Activated T-helper 2 cell treated with anti-CD3 and anti-CD28 coated beads, Interferon-gamma antibody, Interleukin-2, Interleukin-4, amounts not matched to agents 10 μg/mL and 5 μg/mL and 100 μg/mL, durations not matched to agents 14 hours and 24 hours and 36 hours (primary cell): ENCODE measurements at regions of chr7 and their contacts with region 1.

Region 1: GRCh38 chr7:27196287-27196767 is 3.6 kb downstream of the HOXA13 start:
- DNase-seq: peak; percentile 59
- H3K4me3 Mint-ChIP-seq: no peak overlapping the region
- H3K27ac Mint-ChIP-seq: no peak overlapping the region
- H3K4me1 Mint-ChIP-seq: peaks cover 6% of the 10 kb centered on the region
- H3K27me3 Mint-ChIP-seq: peaks cover 82% of the 10 kb centered on the region

Region 2: DNA sequence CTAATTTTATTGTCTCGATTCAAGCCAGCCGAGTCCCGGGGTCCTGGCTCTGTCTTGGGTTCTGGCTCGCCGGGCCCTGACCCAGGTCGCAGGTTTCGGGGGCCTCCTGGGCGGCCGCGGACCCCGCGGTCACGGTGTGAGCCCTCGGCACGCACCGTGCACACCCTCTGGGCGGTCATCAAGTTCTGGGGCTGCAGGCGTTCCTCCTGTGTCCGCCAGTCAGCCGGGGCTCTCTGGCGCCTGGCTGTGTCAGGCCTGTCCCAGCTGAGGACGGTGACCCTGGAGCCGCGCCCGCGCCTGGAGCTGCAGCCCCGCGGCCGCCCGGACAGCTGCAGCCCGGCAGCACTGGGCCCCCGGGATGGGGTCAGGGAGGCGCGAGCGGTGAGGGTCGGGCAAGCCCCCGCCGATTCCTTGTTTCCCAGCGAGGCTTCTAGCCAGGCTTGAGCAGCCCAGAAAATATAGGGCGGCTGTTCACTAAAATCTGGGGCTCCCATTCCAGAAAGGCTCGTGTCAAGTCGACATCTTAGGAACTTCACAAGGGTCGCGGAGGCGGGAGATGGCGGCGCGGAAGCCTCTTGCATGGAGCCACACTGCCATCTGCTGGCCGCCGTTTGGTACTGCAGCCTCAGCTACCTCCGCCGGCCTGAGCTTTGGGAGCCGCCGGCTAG is 35.6 kb before region 1 on chr7:
- intact Hi-C with region 1: loop called (anchors 5 kb)
- DNase-seq: peak; percentile 65
- H3K4me3 Mint-ChIP-seq: peak overlapping the region; percentile 47
- H3K27ac Mint-ChIP-seq: no peak overlapping the region
- H3K4me1 Mint-ChIP-seq: peaks cover 5% of the 10 kb centered on the region
- H3K27me3 Mint-ChIP-seq: peaks cover 81% of the 10 kb centered on the region

Region 3: GRCh38 chr7:27184337-27185012 is 11.9 kb before region 1 on chr7:
- intact Hi-C with region 1: loop called (anchors 2 kb)
- DNase-seq: no peak
- H3K4me3 Mint-ChIP-seq: no peak overlapping the region
- H3K27ac Mint-ChIP-seq: peak overlapping the region; percentile 55
- H3K4me1 Mint-ChIP-seq: peaks cover 14% of the 10 kb centered on the region
- H3K27me3 Mint-ChIP-seq: peaks cover 73% of the 10 kb centered on the region

Region 4: GRCh38 chr7:27224983-27225934 is 28.9 kb after region 1 on chr7:
- intact Hi-C with region 1: no loop called
- DNase-seq: no peak
- H3K4me3 Mint-ChIP-seq: no peak overlapping the region
- H3K27ac Mint-ChIP-seq: no peak overlapping the region
- H3K4me1 Mint-ChIP-seq: no peaks in the 10 kb centered on the region
- H3K27me3 Mint-ChIP-seq: peaks cover 78% of the 10 kb centered on the region

Region 5: DNA sequence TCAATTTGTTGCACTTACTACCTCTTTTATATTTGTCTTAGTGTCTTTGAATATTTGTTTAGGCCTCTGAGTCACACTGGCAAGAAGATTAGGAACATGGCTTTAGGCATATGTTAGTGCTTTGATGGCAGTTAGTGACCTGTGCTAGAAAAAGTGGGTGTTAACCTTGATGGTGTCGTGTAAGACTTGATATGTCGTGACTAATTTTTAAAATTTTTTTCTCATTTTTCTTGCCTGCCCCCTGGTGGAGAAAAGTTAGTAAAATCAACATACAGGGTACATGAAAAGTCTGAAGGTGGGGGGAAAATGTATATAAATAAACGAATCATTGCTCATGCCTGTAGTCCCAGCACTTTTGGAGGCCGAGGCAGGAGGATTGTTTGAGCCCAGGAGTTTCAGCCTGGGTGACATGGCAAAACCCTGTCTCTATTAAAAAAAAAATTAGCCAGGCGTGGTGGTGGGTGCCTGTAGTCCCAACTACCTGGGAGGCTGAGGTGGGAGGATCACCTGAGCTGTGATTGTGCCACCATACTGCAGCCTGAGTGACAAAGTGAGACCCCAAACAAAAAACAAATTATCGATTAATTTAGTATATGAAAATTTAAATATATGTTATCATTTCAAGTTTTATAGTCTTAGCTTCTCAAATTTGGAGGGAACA is 588.2 kb after region 1 on chr7:
- intact Hi-C with region 1: loop called (anchors 10 kb)
- DNase-seq: no peak
- H3K4me3 Mint-ChIP-seq: no peak overlapping the region
- H3K27ac Mint-ChIP-seq: no peak overlapping the region
- H3K4me1 Mint-ChIP-seq: peaks cover 18% of the 10 kb centered on the region
- H3K27me3 Mint-ChIP-seq: no peaks in the 10 kb centered on the region

Region 6: GRCh38 chr7:28020302-28020940 is 824.1 kb after region 1 on chr7:
- intact Hi-C with region 1: loop called (anchors 1 kb)
- DNase-seq: no peak
- H3K4me3 Mint-ChIP-seq: no peak overlapping the region
- H3K27ac Mint-ChIP-seq: no peak overlapping the region
- H3K4me1 Mint-ChIP-seq: peaks cover 3% of the 10 kb centered on the region
- H3K27me3 Mint-ChIP-seq: peaks cover 14% of the 10 kb centered on the region

Region 7: GRCh38 chr7:28096713-28097112 is 900.4 kb after region 1 on chr7:
- intact Hi-C with region 1: loop called (anchors 5 kb)
- DNase-seq: no peak
- H3K4me3 Mint-ChIP-seq: no peak overlapping the region
- H3K27ac Mint-ChIP-seq: no peak overlapping the region
- H3K4me1 Mint-ChIP-seq: peaks cover 2% of the 10 kb centered on the region
- H3K27me3 Mint-ChIP-seq: peaks cover 4% of the 10 kb centered on the region